Activated B cell treated with CpG ODN at 0.5 μM for 24 hours (primary cell): ENCODE measurements at regions of chr11 and their contacts with region 1.

Region 1: GRCh38 chr11:87037450-87038234 is at the start of gene TMEM135:
- DNase-seq: peak; percentile 91
- ATAC-seq: peak; percentile 96
- H3K4me3 Mint-ChIP-seq: peak within 1 kb of the TSS; percentile 99
- H3K27ac Mint-ChIP-seq: peak within 1 kb of the TSS; percentile 75
- H3K4me1 Mint-ChIP-seq: peaks cover 34% of the 10 kb centered on the region
- H3K27me3 Mint-ChIP-seq: no peaks in the 10 kb centered on the region
- CTCF ChIP-seq: no peak
- total RNA-seq, gene TMEM135: 7.4 and 10.1 TPM in 2 replicates

Region 2: DNA sequence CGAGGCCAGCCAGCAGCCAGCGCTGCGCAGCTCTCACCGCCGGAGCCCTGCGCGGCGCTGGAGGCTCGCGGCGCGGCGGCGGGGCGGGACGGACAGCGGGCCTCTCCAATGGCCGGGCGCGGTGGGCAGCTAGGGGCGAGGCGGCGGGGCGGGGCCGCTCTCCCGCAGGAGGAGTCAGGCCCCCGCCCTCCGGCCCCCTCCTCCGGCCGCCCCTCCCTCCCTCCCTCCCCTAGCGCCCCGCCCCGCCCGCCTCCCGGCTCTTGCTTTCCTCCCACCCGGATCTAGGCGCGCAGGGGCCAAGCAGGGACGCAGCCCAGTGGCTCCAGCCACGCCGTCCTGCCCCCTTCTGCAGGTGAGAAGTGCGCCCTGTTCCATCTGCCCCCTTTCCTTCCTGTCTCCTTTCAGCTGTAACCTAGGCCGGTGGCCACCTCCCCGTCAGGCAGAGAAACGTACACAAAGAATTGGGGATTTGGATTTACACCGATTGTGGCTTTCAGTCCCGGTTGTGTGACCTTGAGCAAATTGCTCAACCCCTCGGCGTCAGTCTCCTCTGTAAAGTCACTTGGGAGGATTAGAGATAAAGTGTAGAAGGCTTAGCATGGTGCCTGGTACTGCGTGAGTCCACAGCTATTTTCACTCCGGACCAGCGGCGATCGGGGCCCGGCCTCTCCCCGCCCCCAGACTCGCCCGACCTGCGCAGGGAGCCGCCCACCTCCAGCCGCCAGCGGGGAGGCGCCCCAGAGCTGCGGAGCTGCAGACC is 82.1 kb before region 1 on chr11 and contains the start of gene FZD4:
- CTCF ChIA-PET with region 1: no interaction called
- POLR2A ChIA-PET with region 1: no interaction called
- intact Hi-C with region 1: loop called (anchors 1 kb)
- DNase-seq: peak; percentile 50
- ATAC-seq: peak; percentile 97
- H3K4me3 Mint-ChIP-seq: peak within 1 kb of the TSS; percentile 90
- H3K27ac Mint-ChIP-seq: no peak within 1 kb of the TSS
- H3K4me1 Mint-ChIP-seq: peaks cover 16% of the 10 kb centered on the region
- H3K27me3 Mint-ChIP-seq: peaks cover 33% of the 10 kb centered on the region
- CTCF ChIP-seq: no peak
- total RNA-seq, gene FZD4: not detected in 2 replicates